ENCODE measurements at regions of chr16 and their contacts with region 1.

Region 1: GRCh38 chr16:74738134-74738541 is 36.5 kb downstream of the FA2H start:
- DNase-seq: peak; percentile 83 to 89
- H3K4me3 ChIP-seq: peak overlapping the region; percentile 15; the same call in 1 of the 2 replicates
- H3K27ac ChIP-seq: peak overlapping the region; percentile 71
- H3K4me1 ChIP-seq: peaks cover 63% of the 10 kb centered on the region
- H3K27me3 ChIP-seq: no peaks in the 10 kb centered on the region
- CTCF ChIP-seq: no peak

Region 2: DNA sequence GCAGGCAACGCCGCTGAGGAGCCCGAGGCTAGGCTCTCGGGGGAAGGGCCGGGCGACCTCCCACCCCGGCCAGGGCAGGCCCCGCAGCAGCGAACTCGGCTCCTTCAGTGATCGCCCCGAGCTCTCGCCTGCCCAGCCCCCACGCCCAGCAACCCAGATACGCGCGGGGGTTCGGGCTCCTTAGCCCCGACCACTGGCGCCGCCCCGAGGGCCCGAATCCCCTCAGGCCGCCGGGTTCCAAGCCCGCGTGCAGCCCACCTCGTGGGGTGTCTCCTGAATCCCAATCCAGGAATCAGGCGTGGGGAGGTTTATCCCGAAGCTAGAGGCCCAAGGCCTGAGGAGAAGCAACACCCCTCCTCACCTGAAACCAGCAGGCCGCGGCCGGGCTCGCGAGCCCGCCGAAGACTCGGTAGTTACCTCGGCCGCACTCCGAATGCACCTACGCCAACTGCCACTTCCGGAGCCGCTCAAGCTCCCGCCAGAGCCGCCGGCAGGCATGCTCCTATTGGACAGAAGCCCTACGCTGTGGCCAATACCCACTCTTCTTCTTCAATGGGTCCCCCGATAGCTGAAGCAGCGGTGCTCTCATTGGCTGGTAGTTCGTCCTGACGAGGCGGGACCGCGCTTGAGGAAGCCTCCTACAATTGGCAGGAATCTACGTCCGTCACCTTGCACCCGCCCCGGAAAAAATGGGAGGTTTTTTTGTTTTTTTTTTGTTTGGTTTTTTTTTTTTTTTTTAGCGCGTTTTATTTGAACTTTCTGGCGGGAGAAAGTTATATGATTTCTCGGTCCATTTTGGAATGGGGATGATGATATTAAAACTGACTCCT is 71.5 kb before region 1 on chr16 and contains the start of gene RFWD3:
- CTCF ChIA-PET with region 1: no interaction called
- POLR2A ChIA-PET with region 1: interaction called, 40 read pairs
- intact Hi-C with region 1: no loop called
- DNase-seq: peak; percentile 94 to 97
- H3K4me3 ChIP-seq: peak within 1 kb of the TSS; percentile 100
- H3K27ac ChIP-seq: peak within 1 kb of the TSS; percentile 53
- H3K4me1 ChIP-seq: peaks cover 8% of the 10 kb centered on the region; the same call in 1 of the 2 replicates
- H3K27me3 ChIP-seq: no peaks in the 10 kb centered on the region
- CTCF ChIP-seq: no peak
- total RNA-seq, gene RFWD3: 49.5 and 58.0 TPM in 2 replicates

Region 3: GRCh38 chr16:74726716-74727115 is 11.4 kb before region 1 on chr16:
- CTCF ChIA-PET with region 1: interaction called, 12 read pairs
- POLR2A ChIA-PET with region 1: interaction called, 3 read pairs
- intact Hi-C with region 1: loop called (anchors 1 kb)
- DNase-seq: no peak
- H3K4me3 ChIP-seq: no peak overlapping the region
- H3K27ac ChIP-seq: no peak overlapping the region
- H3K4me1 ChIP-seq: peaks cover 24% of the 10 kb centered on the region
- H3K27me3 ChIP-seq: no peaks in the 10 kb centered on the region
- CTCF ChIP-seq: peak; percentile 73

Region 4: DNA sequence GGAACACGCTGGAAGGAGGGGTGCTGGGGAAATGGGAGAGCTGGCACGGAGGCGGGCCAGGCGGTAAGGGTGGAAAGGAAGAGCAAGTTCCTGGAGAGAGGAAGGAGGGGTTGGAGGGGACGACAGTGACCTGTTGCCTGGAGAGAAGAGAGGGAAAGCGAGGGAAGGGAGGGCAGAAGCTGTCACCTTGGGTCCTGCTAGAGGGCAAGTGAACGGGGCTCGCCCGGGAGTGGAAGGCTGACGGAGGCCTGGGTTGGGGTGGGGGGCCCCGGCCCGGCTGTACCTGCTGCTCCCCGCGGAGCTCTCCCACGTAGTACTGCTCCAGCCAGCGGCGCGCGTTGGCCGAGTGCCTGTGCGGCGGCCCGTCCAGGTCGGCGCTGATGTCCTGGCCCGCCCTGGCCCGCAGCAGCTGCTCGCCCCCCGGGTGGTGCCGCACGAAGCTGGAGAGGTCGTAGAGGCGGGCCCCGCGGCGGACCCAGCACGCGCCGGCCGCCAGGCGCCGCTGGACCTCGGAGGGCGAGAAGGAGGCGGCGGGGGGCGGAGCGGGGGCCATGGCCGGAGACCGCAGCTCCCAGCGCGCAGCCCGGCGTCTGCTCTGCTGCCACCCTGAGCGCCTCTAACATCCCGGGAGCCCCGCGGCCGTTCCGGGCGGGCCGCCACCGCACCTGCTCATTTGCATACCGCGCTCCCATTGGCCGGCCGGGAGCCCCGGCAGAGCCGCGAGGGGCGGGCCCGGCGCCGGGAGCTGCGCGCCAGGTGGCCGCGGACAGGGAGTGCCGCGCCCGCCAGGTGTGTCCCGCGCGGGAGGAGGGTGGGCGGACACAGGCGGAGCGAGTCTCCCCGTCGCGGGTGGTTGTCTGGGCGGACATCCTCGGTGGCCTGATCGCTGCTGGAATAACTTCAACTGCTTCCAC is 36.3 kb after region 1 on chr16 and contains the start of gene FA2H:
- CTCF ChIA-PET with region 1: no interaction called
- POLR2A ChIA-PET with region 1: no interaction called
- intact Hi-C with region 1: loop called (anchors 2 kb)
- DNase-seq: peak; percentile 84 to 95
- H3K4me3 ChIP-seq: peak within 1 kb of the TSS; percentile 68
- H3K27ac ChIP-seq: no peak within 1 kb of the TSS
- H3K4me1 ChIP-seq: peaks cover 4% of the 10 kb centered on the region; the same call in 1 of the 2 replicates
- H3K27me3 ChIP-seq: no peaks in the 10 kb centered on the region
- CTCF ChIP-seq: peak; percentile 48; the same call in 1 of the 2 replicates
- total RNA-seq, gene FA2H: 3.5 and 4.8 TPM in 2 replicates